PC-9 (cell line): ENCODE measurements at regions of chr7 and their contacts with region 1.

Region 1: GRCh38 chr7:102125127-102125561 is 161.5 kb upstream of the SH2B2 start:
- DNase-seq: peak; percentile 68 to 90
- H3K4me3 ChIP-seq: no peak overlapping the region
- H3K27ac ChIP-seq: no peak overlapping the region
- H3K4me1 ChIP-seq: peaks cover 14% of the 10 kb centered on the region
- H3K27me3 ChIP-seq: no peaks in the 10 kb centered on the region
- CTCF ChIP-seq: no peak

Region 2: GRCh38 chr7:101435461-101436220 is 689.5 kb before region 1 on chr7:
- CTCF ChIA-PET with region 1: no interaction called
- POLR2A ChIA-PET with region 1: no interaction called
- intact Hi-C with region 1: no loop called
- DNase-seq: no peak
- H3K4me3 ChIP-seq: no peak overlapping the region
- H3K27ac ChIP-seq: no peak overlapping the region
- H3K4me1 ChIP-seq: no peaks in the 10 kb centered on the region
- H3K27me3 ChIP-seq: peaks cover 47% of the 10 kb centered on the region
- CTCF ChIP-seq: no peak

Region 3: DNA sequence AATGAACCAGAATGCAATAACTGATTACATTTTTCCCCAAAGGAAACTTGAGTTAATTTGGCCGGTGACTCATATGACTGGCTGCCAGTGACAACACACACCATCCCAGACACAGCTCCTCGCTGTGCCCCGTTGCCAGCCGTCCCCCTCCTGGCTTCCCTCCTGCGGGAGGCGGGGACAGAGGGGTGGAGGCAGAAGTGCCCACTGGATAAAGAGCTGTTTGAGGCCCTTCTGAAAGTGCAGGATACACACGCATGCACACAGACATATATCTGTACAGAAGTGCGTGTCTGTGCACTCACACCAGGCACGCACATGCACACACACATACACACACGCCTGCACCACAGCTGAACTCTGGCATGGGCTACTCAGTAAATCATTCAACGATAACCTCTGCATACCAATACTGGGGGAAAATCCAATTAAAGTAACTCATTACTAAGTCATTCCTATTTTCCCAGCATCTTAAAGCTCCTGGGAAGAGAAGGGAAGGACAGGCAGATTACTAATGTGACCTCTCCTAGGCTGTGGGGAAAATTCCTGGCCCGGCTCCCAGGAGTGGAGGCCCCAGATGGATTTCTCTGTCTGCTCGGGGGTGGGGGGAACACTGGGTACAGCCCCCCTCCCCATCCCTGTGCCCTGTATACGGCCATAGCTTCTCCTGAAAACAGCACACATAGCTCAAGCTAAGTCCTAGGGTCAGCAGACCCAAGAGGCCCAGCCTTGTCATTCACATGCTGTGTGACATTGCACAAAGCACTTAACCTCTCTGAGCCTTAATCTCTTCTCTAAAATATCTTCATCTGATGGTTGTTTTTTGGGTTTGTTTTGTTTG is 443.8 kb before region 1 on chr7:
- CTCF ChIA-PET with region 1: no interaction called
- POLR2A ChIA-PET with region 1: no interaction called
- intact Hi-C with region 1: loop called (anchors 1 kb)
- DNase-seq: peak; percentile 62 to 84
- H3K4me3 ChIP-seq: no peak overlapping the region
- H3K27ac ChIP-seq: no peak overlapping the region
- H3K4me1 ChIP-seq: peaks cover 13% of the 10 kb centered on the region
- H3K27me3 ChIP-seq: no peaks in the 10 kb centered on the region
- CTCF ChIP-seq: no peak

Region 4: DNA sequence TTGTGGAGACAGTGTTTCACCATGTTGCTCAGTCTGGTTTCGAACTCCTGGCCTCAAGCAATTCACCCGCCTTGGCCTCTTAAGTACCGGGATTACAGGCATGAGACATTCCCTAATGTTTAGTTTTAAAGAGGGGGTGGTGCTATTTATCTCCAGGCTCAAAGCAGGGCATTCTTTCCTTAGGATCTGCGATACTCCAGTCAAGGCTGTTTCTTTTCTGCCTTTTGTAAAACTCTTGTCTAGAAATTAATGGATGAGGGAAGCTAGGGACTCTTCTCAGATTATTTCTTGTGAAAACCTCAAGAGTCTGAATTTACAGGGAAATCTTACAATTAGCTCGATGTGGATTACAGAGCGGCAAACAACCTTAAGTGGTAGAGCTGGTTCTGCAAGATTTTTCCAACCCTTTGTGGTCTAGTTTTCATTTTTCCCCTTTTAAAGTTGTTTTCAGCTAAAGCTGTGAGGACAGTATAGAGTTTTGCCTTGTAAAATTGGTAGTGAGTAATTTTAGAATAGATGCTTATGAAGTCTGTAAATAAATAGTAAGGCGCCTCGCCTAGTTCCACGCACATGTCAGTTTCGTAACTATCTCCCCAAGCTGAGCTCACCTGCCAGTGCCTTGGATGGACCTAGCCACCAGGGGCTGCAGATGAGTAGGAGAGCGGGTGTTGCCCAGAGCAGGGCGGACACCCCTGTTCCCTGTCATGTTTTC is 254.6 kb before region 1 on chr7:
- CTCF ChIA-PET with region 1: no interaction called
- POLR2A ChIA-PET with region 1: no interaction called
- intact Hi-C with region 1: loop called (anchors 5 kb)
- DNase-seq: peak; percentile 76 to 91
- H3K4me3 ChIP-seq: peak overlapping the region; percentile 30; the same call in 1 of the 2 replicates
- H3K27ac ChIP-seq: peak overlapping the region; percentile 86
- H3K4me1 ChIP-seq: peaks cover 32% of the 10 kb centered on the region
- H3K27me3 ChIP-seq: no peaks in the 10 kb centered on the region
- CTCF ChIP-seq: peak; percentile 64

Region 5: DNA sequence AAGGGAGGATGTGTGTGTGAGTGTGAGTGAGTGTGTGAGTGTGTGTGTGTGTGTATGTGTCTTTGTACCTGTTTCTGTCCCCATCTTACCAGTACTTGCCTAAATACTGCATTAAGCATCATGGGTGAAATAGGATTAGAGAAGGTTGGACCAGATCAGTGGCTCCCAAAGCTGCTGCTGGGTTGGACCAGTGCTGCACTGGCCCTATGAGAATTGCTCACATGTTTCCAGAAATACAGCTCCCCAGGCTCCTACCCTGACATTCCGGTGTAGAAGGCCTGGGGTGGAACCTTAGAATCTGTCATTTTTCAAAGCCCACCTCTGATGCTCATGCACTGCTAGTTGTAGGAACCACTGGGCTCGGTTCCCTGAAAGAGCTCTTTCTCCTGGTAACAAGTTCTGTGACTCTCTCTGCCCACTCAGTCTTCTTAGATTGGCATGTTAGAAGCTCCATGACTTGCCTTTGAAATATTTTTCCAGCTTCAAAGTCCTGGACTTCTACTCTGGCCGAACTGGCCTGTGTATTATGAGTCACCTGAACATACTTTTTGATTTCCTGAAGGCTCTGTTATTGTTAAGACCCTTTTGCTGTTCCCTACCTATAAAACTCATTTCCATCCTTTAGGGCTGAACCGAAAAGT is 83.0 kb before region 1 on chr7:
- CTCF ChIA-PET with region 1: interaction called, 11 read pairs
- POLR2A ChIA-PET with region 1: no interaction called
- intact Hi-C with region 1: no loop called
- DNase-seq: peak; percentile 33 to 69
- H3K4me3 ChIP-seq: no peak overlapping the region
- H3K27ac ChIP-seq: 0 out of 2 replicates have a peak overlapping the region, but pooled peaks have one; percentile 21
- H3K4me1 ChIP-seq: peaks cover 6% of the 10 kb centered on the region
- H3K27me3 ChIP-seq: no peaks in the 10 kb centered on the region
- CTCF ChIP-seq: no peak

Region 6: DNA sequence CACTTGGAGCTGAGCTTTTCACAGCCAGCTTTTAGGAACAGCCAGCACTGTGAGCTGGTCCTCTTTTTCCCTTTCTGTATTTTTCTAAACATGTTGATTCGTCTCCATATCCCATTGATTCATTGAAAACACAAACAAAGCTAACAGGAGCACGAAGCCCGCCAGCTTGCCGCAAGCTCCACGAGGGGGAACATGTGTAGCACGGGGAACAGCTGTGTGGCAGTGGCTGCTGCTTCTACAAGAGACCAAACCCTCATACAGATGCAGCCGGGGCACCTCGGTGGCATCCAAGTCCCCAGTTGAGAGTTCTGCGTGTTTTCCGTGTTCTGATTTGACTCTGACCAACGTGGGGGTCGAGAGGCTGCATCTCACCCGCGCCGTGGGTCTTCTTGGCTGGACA is 80.8 kb after region 1 on chr7:
- CTCF ChIA-PET with region 1: interaction called, 10 read pairs
- POLR2A ChIA-PET with region 1: no interaction called
- intact Hi-C with region 1: no loop called
- DNase-seq: no peak
- H3K4me3 ChIP-seq: no peak overlapping the region
- H3K27ac ChIP-seq: no peak overlapping the region
- H3K4me1 ChIP-seq: no peaks in the 10 kb centered on the region
- H3K27me3 ChIP-seq: no peaks in the 10 kb centered on the region
- CTCF ChIP-seq: no peak